AG04450 (cell line): ENCODE measurements at regions of chr1 and their contacts with region 1.

Region 1: DNA sequence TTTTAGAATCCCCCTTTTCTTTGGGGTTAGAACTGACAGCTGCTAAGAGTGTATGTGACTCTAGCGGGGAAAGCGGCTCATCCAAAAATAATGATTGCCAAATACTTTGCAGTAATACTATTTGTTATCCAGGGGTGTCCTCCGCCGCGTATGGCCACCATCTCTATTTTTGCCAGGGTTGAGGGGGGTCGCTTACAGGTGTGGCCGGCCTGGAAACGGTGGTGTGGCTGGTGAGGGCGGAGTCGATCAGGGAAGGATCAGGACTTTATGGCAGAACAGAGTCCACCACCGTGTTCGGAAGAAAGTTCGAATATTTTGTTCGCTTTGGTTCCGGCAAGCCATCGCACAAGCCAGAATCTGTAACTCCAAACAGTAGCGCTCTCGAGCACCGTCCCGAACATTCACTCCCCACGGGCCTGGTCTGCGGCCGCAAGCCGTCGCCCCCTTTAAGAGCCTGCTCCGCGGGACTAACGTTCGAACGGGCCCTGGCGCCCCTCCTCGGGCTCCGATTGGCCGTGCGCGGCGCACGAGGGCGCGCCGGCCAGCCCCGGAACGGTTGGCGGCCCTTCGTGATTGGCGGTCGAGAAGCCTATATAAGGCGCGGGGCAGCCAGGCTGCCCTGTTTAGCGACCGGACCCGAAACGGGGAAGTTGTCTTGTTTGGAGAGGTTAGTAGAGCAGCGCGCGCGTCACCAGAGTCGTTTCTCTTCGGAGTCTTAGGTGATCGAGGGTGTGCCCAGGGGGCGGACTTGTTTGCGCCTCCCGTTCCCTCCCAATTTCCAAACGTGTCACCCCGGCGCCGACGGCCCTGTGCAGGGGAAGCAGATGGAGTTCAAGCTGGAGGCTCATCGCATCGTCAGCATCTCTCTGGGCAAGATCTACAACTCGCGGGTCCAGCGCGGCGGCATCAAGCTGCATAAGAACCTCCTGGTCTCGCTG is at the start of gene IER5:
- DNase-seq: peak; percentile 85
- H3K4me3 ChIP-seq: peak within 1 kb of the TSS; percentile 94
- H3K27ac ChIP-seq: peak within 1 kb of the TSS; percentile 71
- H3K27me3 ChIP-seq: no peaks in the 10 kb centered on the region
- CTCF ChIP-seq: no peak
- polyA plus RNA-seq, gene IER5: 20.4 and 20.7 TPM in 2 replicates

Region 2: GRCh38 chr1:180951836-180952656 is 136.3 kb before region 1 on chr1:
- CTCF ChIA-PET with region 1: interaction called, 11 read pairs
- POLR2A ChIA-PET with region 1: no interaction called
- DNase-seq: no peak
- H3K4me3 ChIP-seq: no peak overlapping the region
- H3K27ac ChIP-seq: no peak overlapping the region
- H3K27me3 ChIP-seq: no peaks in the 10 kb centered on the region
- CTCF ChIP-seq: no peak

Region 3: GRCh38 chr1:181099152-181100014 is 11.0 kb after region 1 on chr1:
- CTCF ChIA-PET with region 1: interaction called, 4 read pairs
- POLR2A ChIA-PET with region 1: interaction called, 80 read pairs
- DNase-seq: no peak
- H3K4me3 ChIP-seq: no peak overlapping the region
- H3K27ac ChIP-seq: peak overlapping the region; percentile 22
- H3K27me3 ChIP-seq: no peaks in the 10 kb centered on the region
- CTCF ChIP-seq: no peak

Region 4: GRCh38 chr1:181112071-181112929 is 24.0 kb after region 1 on chr1:
- CTCF ChIA-PET with region 1: no interaction called
- POLR2A ChIA-PET with region 1: interaction called, 80 read pairs
- DNase-seq: peak; percentile 97
- H3K4me3 ChIP-seq: no peak overlapping the region
- H3K27ac ChIP-seq: peak overlapping the region; percentile 90
- H3K27me3 ChIP-seq: no peaks in the 10 kb centered on the region
- CTCF ChIP-seq: no peak

Region 5: GRCh38 chr1:181356505-181357340 is 268.4 kb after region 1 on chr1:
- CTCF ChIA-PET with region 1: no interaction called
- POLR2A ChIA-PET with region 1: no interaction called
- DNase-seq: no peak
- H3K4me3 ChIP-seq: no peak overlapping the region
- H3K27ac ChIP-seq: no peak overlapping the region
- H3K27me3 ChIP-seq: peaks cover 2% of the 10 kb centered on the region
- CTCF ChIP-seq: no peak

Region 6: DNA sequence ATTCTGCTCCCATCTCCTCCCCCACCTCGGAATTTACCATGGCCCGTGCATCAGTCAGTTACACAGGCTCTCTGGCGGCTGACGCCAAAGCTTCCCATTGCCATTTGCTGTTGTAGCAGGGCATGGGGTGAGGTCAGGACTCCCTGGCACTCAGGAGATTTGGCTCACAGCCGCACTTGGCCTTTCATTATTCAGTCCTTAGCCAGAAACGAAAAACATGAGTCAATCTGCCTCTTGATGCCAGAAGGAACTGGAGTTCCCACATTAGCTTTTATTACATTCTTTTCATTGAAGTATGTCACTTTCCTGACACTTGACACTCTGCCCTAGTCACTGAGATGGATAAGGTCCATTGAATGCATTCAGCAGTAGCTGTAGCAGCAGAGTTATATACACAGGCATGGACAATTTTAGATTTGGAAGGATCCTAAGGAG is 655.5 kb after region 1 on chr1:
- CTCF ChIA-PET with region 1: no interaction called
- POLR2A ChIA-PET with region 1: interaction called, 11 read pairs
- DNase-seq: no peak
- H3K4me3 ChIP-seq: no peak overlapping the region
- H3K27ac ChIP-seq: no peak overlapping the region
- H3K27me3 ChIP-seq: no peaks in the 10 kb centered on the region
- CTCF ChIP-seq: no peak